ENCODE measurements at regions of chr2 and their contacts with region 1.

Region 1: GRCh38 chr2:58571181-58571852 is 330.2 kb upstream of the FANCL start:
- DNase-seq: peak; percentile 73
- H3K4me3 ChIP-seq: no peak overlapping the region
- H3K27ac ChIP-seq: no peak overlapping the region
- H3K4me1 ChIP-seq: no peaks in the 10 kb centered on the region; a peak in 2 of 4 replicates
- H3K27me3 ChIP-seq: no peaks in the 10 kb centered on the region
- CTCF ChIP-seq: peak; percentile 76
- EP300 ChIP-seq: no peak
- RAD21 ChIP-seq: peak; percentile 92

Region 2: GRCh38 chr2:58620093-58620492 is 48.8 kb after region 1 on chr2:
- CTCF ChIA-PET with region 1: no interaction called
- POLR2A ChIA-PET with region 1: no interaction called
- DNase-seq: no peak
- H3K4me3 ChIP-seq: no peak overlapping the region
- H3K27ac ChIP-seq: peak overlapping the region in 1 of 2 experiments; percentile 49; a peak in 2 of 4 replicates
- H3K4me1 ChIP-seq: peaks cover 0 to 5% of the 10 kb centered on the region in 2 experiments; a peak in 1 of 4 replicates
- H3K27me3 ChIP-seq: no peaks in the 10 kb centered on the region
- CTCF ChIP-seq: no peak
- EP300 ChIP-seq: no peak
- RAD21 ChIP-seq: no peak

Region 3: GRCh38 chr2:58680755-58681310 is 109.5 kb after region 1 on chr2:
- CTCF ChIA-PET with region 1: interaction called, 16 read pairs
- POLR2A ChIA-PET with region 1: no interaction called
- DNase-seq: no peak
- H3K4me3 ChIP-seq: no peak overlapping the region
- H3K27ac ChIP-seq: no peak overlapping the region
- H3K4me1 ChIP-seq: no peaks in the 10 kb centered on the region; a peak in 1 of 4 replicates
- H3K27me3 ChIP-seq: no peaks in the 10 kb centered on the region
- CTCF ChIP-seq: peak; percentile 44
- EP300 ChIP-seq: no peak
- RAD21 ChIP-seq: peak; percentile 23; the same call in 1 of the 2 replicates